Activated B cell treated with CpG ODN at 0.5 μM for 24 hours (primary cell): ENCODE measurements at regions of chr12 and their contacts with region 1.

Region 1: DNA sequence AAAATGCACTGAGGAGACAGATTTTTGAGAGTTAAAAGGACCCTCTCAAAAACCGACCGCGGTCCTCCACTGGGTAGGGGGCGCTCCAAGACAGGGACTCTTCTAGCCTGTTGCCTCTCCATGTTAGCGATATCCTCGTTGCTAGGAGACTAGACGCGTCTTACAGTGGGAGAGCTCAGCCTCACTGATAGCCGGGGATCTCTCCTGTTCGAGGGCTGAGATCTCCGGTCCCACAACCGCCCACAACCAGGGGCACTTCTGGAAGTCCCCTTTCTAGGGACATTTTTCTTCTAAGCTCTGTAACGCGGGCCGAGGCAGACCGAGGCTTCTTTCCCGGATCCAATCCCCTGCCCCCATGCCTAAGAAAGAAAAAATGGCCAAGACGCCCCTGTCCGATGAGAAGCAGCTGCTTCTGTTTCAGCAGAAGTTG is 21.3 kb downstream of the FKBP11 start:
- DNase-seq: peak; percentile 53
- ATAC-seq: peak; percentile 97
- H3K4me3 Mint-ChIP-seq: peak overlapping the region; percentile 77
- H3K27ac Mint-ChIP-seq: no peak overlapping the region
- H3K4me1 Mint-ChIP-seq: peaks cover 10% of the 10 kb centered on the region
- H3K27me3 Mint-ChIP-seq: peaks cover 18% of the 10 kb centered on the region
- CTCF ChIP-seq: no peak

Region 2: GRCh38 chr12:48936379-48936979 is 32.5 kb after region 1 on chr12:
- CTCF ChIA-PET with region 1: no interaction called
- POLR2A ChIA-PET with region 1: no interaction called
- intact Hi-C with region 1: loop called (anchors 1 kb)
- DNase-seq: peak; percentile 68
- ATAC-seq: peak; percentile 74
- H3K4me3 Mint-ChIP-seq: no peak overlapping the region
- H3K27ac Mint-ChIP-seq: no peak overlapping the region
- H3K4me1 Mint-ChIP-seq: peaks cover 36% of the 10 kb centered on the region
- H3K27me3 Mint-ChIP-seq: no peaks in the 10 kb centered on the region
- CTCF ChIP-seq: peak; percentile 26

Region 3: DNA sequence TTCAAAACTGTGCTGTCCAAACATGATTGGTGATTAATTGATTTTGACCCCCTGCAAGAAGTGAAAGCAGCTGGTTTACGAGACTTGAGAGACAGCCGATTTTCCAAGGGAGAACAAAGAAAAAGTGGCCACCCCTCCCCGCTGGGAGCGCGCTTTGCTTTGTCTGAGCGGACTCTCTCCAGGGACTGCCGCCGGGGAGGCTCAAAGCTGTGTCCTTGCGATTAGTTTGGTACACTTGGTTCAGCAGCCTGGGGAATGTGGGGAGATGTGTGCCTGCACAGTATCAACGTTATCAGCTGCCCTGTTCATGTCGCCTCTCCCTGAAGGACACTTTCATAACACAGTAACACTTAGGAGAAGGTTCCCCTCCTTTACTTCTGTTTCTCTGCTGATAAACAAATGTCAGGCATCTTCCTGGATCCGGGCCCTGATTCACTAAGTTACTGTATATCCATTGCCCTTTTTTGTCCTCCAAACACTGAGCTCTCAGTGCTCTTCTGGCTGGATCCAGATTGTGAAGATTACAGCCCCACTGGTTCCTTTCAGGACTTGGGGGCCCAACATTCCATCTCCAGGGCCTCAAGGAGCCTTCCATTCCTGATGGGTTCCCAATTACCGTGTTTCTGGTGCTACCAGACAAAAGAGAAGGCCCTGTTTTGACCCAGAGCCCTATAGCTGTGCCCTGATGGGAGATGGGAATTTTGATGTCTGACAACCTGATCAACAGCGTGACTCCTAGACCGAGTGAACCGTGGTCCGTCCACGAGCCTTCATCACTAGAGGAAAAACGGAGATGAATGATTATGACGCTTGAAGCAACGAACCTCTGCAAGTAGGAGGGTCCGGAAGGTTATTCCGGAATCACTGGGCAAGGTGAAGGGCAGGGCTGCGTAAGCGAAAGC is 329.2 kb after region 1 on chr12:
- CTCF ChIA-PET with region 1: no interaction called
- POLR2A ChIA-PET with region 1: no interaction called
- intact Hi-C with region 1: no loop called
- DNase-seq: no peak
- ATAC-seq: no peak
- H3K4me3 Mint-ChIP-seq: peak overlapping the region; percentile 93
- H3K27ac Mint-ChIP-seq: peak overlapping the region; percentile 89
- H3K4me1 Mint-ChIP-seq: peaks cover 15% of the 10 kb centered on the region
- H3K27me3 Mint-ChIP-seq: no peaks in the 10 kb centered on the region
- CTCF ChIP-seq: no peak